Activated CD8-positive, alpha-beta T cell treated with anti-CD3 and anti-CD28 coated beads, Interleukin-2, amount 10 ng/mL, durations not matched to agents 7 days and 5 days (primary cell): ENCODE measurements at regions of chr12 and their contacts with region 1.

Region 1: GRCh38 chr12:27014085-27014858 is at the start of gene TM7SF3:
- DNase-seq: peak; percentile 97
- ATAC-seq: peak; percentile 88
- H3K4me3 Mint-ChIP-seq: peak within 1 kb of the TSS; percentile 93
- H3K27ac Mint-ChIP-seq: peak within 1 kb of the TSS; percentile 90
- H3K4me1 Mint-ChIP-seq: peaks cover 58% of the 10 kb centered on the region
- H3K27me3 Mint-ChIP-seq: no peaks in the 10 kb centered on the region
- total RNA-seq, gene TM7SF3: 46.2 to 54.0 TPM

Region 2: GRCh38 chr12:26768611-26769603 is 245.4 kb before region 1 on chr12:
- CTCF ChIA-PET with region 1: no interaction called
- POLR2A ChIA-PET with region 1: no interaction called
- DNase-seq: no peak
- ATAC-seq: peak; percentile 42
- H3K4me3 Mint-ChIP-seq: no peak overlapping the region
- H3K27ac Mint-ChIP-seq: peak overlapping the region; percentile 46
- H3K4me1 Mint-ChIP-seq: peaks cover 24% of the 10 kb centered on the region
- H3K27me3 Mint-ChIP-seq: no peaks in the 10 kb centered on the region

Region 3: DNA sequence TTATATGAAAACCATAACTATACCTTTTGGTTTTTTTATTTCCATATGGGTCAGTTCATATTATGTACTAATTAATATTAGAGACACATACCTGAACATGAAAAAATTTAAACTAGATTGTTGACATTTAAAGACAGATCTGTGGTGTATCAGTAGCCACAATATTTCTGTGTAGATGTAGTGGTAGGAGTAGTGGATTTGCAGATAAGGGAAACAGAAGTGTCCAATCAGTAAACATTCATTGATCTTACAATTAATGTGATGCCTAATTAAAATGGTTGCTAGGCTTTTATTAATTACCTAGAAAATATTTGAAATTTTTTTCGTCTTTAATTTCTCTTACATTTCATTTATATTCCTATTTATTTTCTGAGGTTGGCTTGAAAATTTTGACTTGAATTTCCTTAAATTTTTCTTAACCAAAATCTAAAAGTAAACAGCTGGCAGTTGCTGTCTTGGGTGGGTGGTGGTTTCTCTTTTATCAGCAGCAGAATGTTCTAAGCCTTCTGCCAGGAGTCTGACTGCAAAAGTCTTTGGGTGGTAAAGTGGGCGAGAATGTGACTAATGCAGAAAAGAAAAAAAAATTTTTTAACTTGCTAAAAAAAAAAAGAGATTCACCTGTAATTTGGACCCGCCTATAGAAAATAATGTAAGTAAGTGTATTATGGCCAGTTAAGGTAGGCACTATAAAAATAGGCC is 73.6 kb before region 1 on chr12:
- CTCF ChIA-PET with region 1: interaction called, 13 read pairs
- POLR2A ChIA-PET with region 1: interaction called, 9 read pairs
- DNase-seq: peak; percentile 39
- ATAC-seq: no peak
- H3K4me3 Mint-ChIP-seq: peak overlapping the region; percentile 95
- H3K27ac Mint-ChIP-seq: peak overlapping the region; percentile 94
- H3K4me1 Mint-ChIP-seq: peaks cover 48% of the 10 kb centered on the region
- H3K27me3 Mint-ChIP-seq: no peaks in the 10 kb centered on the region

Region 4: DNA sequence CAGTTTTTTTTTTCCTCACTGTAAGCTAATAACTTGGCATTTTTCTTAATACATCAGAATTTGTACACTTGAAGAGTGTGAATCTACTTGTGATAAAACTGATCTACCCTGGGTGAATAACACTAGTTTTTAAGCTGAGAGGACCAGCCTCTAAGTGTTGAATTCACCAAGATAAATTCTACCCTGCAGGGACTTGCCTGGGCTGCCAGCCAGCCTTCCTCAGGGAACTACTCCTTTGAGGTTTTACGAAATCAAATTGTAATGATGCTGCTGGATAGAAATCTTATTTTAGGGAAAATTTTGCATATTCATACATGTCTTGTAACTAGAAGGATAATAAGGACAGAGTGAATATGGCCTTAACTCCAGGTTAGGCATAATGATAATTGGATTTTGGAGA is 10.0 kb after region 1 on chr12:
- CTCF ChIA-PET with region 1: interaction called, 58 read pairs
- POLR2A ChIA-PET with region 1: interaction called, 5 read pairs
- DNase-seq: no peak
- ATAC-seq: no peak
- H3K4me3 Mint-ChIP-seq: no peak overlapping the region
- H3K27ac Mint-ChIP-seq: no peak overlapping the region
- H3K4me1 Mint-ChIP-seq: peaks cover 41% of the 10 kb centered on the region
- H3K27me3 Mint-ChIP-seq: no peaks in the 10 kb centered on the region

Region 5: GRCh38 chr12:27048822-27049752 is 34.8 kb after region 1 on chr12:
- CTCF ChIA-PET with region 1: no interaction called
- POLR2A ChIA-PET with region 1: no interaction called
- DNase-seq: no peak
- ATAC-seq: no peak
- H3K4me3 Mint-ChIP-seq: no peak overlapping the region
- H3K27ac Mint-ChIP-seq: no peak overlapping the region
- H3K4me1 Mint-ChIP-seq: no peaks in the 10 kb centered on the region
- H3K27me3 Mint-ChIP-seq: no peaks in the 10 kb centered on the region